Activated B cell treated with CpG ODN at 0.5 μM for 24 hours (primary cell): ENCODE measurements at regions of chr16 and their contacts with region 1.

Region 1: DNA sequence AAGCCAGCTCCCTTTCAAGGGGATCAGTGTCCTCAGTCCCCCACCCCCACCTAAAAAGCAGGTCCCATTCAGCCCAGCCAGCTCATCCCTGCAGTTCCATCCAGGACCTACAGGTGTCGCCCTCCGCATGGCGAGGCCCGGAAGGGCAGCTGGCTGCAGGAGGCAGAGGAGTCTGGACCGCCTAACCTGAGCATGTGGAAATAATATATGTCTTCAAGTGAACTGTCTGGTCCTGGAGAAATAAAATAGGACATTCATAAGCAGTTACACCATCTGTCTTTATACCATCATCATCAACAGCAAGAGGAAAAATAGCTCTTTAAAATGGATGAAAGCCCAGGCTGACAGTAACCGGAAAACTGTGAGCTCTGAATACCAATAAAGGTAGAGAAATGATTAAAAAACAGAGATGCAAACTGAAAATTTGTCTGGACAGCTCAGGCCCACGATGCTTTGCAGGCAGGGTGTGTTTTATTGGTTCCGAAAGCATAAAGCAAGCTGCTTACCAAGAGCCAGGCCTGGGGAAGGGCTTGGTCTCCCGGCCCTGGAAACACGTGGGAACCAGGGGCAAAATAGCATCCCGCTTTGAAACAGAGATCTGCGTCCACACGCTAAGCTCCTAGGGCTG is 215.2 kb downstream of the ZFHX3 start:
- DNase-seq: peak; percentile 71
- ATAC-seq: peak; percentile 83
- H3K4me3 Mint-ChIP-seq: no peak overlapping the region
- H3K27ac Mint-ChIP-seq: no peak overlapping the region
- H3K4me1 Mint-ChIP-seq: peaks cover 5% of the 10 kb centered on the region
- H3K27me3 Mint-ChIP-seq: no peaks in the 10 kb centered on the region
- CTCF ChIP-seq: peak; percentile 87

Region 2: DNA sequence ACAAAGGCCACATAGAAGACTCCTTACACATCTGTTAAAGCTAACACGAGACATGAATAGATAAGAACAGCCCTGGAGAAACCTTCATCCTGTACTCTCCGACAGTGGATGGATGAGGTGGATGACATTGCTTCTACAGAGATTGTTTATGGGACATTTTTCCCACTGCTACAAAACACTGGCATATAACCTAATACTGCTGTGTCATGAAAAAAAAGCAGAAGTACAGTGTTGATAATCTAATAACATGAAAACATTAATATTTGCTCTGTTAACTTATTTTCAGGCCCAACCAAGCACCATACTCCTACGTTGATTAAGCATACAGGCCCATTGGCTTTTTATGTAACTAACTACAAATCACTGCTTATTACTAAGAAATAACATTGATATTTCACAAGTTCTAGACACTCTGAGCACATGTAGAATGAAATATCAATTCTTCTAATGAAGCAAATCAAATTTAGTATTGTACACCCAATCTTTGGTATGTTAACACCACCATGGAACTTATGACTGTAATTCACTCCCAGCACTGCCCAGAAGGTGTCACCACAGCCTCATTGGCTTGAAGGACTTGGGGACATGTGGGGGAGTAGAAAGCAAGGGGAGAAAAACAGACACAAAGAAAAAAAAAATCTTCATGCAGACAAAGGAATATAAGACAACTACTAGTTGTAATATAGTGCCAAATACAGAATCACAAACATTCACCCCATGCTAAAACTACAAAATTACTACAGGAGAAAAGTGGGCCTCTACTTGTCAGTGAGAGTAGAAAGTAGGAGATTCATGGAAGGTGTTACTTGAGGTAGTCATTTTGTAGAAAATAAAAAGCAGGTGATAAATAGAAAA is 330.8 kb before region 1 on chr16:
- CTCF ChIA-PET with region 1: interaction called, 14 read pairs
- POLR2A ChIA-PET with region 1: no interaction called
- intact Hi-C with region 1: loop called (anchors 1 kb)
- DNase-seq: peak; percentile 29
- ATAC-seq: peak; percentile 58
- H3K4me3 Mint-ChIP-seq: no peak overlapping the region
- H3K27ac Mint-ChIP-seq: no peak overlapping the region
- H3K4me1 Mint-ChIP-seq: peaks cover 3% of the 10 kb centered on the region
- H3K27me3 Mint-ChIP-seq: no peaks in the 10 kb centered on the region
- CTCF ChIP-seq: peak; percentile 26

Region 3: DNA sequence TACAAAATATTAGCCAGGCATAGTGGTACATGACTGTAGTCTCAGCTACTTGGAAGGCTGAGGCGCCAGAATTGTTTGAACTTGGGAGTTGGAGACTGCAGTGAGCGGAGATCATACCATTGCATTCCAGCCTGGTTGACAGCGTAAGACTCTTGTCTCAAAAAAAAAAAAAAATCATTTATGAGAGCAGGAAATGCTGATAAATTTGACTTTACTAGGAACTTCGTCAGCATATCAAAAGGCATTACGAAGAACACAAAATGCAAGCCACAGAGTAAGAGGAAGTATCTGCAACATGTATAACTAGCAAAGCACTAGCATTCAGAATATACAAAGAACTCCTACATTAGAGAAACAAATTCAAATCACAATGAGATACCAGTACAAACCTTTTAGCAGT is 64.1 kb before region 1 on chr16:
- CTCF ChIA-PET with region 1: no interaction called
- POLR2A ChIA-PET with region 1: no interaction called
- intact Hi-C with region 1: no loop called
- DNase-seq: no peak
- ATAC-seq: no peak
- H3K4me3 Mint-ChIP-seq: no peak overlapping the region
- H3K27ac Mint-ChIP-seq: no peak overlapping the region
- H3K4me1 Mint-ChIP-seq: no peaks in the 10 kb centered on the region
- H3K27me3 Mint-ChIP-seq: no peaks in the 10 kb centered on the region
- CTCF ChIP-seq: no peak

Region 4: DNA sequence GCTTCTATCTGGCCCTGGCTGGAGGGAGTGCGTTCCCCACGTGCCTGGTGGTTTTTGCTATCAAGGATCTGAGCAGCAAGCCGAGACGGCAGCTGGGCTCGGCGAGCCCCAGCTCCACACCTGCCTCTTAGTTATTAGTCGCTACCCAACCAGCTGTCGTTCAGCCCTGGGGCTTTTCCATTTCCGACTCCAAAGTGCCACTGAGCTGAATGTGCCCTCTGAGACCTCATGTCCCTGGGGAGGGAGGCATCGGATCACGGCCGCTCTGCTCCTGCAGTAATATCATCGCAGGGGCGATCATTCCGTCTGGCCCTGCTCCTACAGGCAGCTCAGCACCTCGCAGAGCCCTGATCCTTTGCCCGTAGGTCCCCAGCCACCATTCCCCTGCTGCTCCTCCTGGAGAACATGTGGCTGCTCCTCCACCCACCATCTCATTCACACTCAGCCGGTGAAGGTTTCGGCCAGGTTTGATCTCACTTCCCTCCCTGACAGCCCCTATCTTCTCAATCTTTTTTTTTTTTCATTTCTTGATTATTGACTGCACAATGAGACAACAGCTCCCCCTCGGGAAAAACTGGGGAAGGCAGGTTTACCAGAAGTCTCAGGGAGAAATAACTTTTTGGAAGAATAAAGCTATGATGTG is 128.5 kb after region 1 on chr16:
- CTCF ChIA-PET with region 1: no interaction called
- POLR2A ChIA-PET with region 1: no interaction called
- intact Hi-C with region 1: no loop called
- DNase-seq: no peak
- ATAC-seq: no peak
- H3K4me3 Mint-ChIP-seq: no peak overlapping the region
- H3K27ac Mint-ChIP-seq: no peak overlapping the region
- H3K4me1 Mint-ChIP-seq: no peaks in the 10 kb centered on the region
- H3K27me3 Mint-ChIP-seq: no peaks in the 10 kb centered on the region
- CTCF ChIP-seq: no peak

Region 5: GRCh38 chr16:73047518-73048291 is 215.0 kb after region 1 on chr16 and contains the start of gene ZFHX3:
- CTCF ChIA-PET with region 1: interaction called, 5 read pairs
- POLR2A ChIA-PET with region 1: interaction called, 4 read pairs
- intact Hi-C with region 1: loop called (anchors 1 kb)
- DNase-seq: peak; percentile 70
- ATAC-seq: peak; percentile 87
- H3K4me3 Mint-ChIP-seq: peak within 1 kb of the TSS; percentile 82
- H3K27ac Mint-ChIP-seq: peak within 1 kb of the TSS; percentile 50
- H3K4me1 Mint-ChIP-seq: peaks cover 17% of the 10 kb centered on the region
- H3K27me3 Mint-ChIP-seq: peaks cover 3% of the 10 kb centered on the region
- CTCF ChIP-seq: no peak
- total RNA-seq, gene ZFHX3: 9.2 and 9.6 TPM in 2 replicates

Region 6: DNA sequence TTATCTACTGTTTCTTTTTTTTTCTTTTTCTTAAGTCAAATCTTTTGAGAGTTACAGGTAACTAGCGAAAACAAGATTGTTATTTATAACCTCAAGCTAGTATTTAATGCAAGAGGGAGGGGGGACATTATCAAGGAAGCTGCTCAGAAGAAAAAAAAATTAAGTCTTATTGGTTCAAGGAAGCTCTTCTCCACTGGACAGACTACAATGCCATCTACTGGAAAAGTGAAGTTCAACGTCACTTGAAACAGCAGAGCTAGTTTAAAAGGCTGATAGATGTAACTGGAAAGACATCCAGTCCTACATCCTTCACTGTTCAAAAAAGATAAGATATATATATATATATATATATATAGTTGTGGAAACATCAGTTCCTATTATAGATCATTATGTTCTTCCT is 1045.9 kb after region 1 on chr16:
- CTCF ChIA-PET with region 1: interaction called, 9 read pairs
- POLR2A ChIA-PET with region 1: no interaction called
- intact Hi-C with region 1: loop called (anchors 2 kb)
- DNase-seq: no peak
- ATAC-seq: no peak
- H3K4me3 Mint-ChIP-seq: no peak overlapping the region
- H3K27ac Mint-ChIP-seq: no peak overlapping the region
- H3K4me1 Mint-ChIP-seq: no peaks in the 10 kb centered on the region
- H3K27me3 Mint-ChIP-seq: peaks cover under 1% of the 10 kb centered on the region
- CTCF ChIP-seq: no peak

Region 7: DNA sequence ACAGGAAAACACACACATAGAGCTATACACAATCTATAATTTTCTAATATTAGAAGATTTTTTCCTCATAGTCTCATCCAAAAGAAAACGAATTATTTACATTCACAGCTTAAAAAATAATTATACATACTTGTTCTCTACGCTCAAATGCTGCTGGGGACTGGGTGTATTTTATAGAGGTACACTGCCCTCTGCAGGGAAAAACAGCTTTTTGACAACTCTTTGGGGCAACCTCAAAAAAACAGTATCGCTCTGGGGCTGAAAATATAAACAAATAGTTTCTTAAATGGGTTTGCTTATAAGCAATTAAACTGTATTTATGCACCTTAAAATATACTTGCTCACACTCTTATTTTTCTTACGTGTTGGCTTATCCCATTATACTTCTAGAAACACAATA is 1202.1 kb after region 1 on chr16:
- CTCF ChIA-PET with region 1: no interaction called
- POLR2A ChIA-PET with region 1: no interaction called
- intact Hi-C with region 1: loop called (anchors 5 kb)
- DNase-seq: no peak
- ATAC-seq: no peak
- H3K4me3 Mint-ChIP-seq: no peak overlapping the region
- H3K27ac Mint-ChIP-seq: no peak overlapping the region
- H3K4me1 Mint-ChIP-seq: no peaks in the 10 kb centered on the region
- H3K27me3 Mint-ChIP-seq: no peaks in the 10 kb centered on the region
- CTCF ChIP-seq: no peak